ENCODE measurements at regions of chr10 and their contacts with region 1.

Region 1: GRCh38 chr10:26725837-26726727 is 28.6 kb downstream of the PDSS1 start:
- DNase-seq: peak; percentile 51
- H3K4me3 Mint-ChIP-seq: no peak overlapping the region
- H3K27ac Mint-ChIP-seq: no peak overlapping the region
- H3K4me1 Mint-ChIP-seq: no peaks in the 10 kb centered on the region
- H3K27me3 Mint-ChIP-seq: no peaks in the 10 kb centered on the region

Region 2: DNA sequence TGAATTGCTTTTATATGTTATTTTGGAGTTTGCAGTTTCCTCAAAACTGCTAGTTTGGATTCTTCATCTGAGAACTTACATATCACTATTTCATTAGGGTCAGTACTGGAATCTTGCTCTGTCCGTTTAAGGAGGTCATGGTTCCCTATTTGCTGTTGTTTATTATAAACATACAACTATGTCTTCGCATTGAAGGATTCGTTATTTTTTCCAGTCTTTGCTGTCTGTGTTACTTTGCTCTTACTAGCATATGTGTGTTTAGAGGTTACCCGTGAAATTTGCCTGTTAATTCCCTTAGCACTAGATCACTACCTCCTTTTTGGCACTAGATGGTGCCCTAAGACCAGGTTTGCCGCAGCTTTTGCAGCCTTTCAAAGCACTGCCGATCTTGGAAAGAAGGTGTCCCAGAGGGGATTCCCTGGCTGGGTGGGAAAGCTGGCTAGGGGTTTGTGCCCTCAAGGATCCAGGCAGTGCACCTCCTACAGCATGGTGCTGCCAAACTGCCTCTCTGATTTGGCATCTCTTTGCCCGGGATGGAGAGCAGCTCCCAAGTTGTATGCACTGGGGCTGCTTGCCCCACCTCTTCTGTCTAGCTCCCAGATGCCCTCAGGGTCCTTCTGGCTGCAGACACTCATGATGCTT is 391.0 kb before region 1 on chr10:
- CTCF ChIA-PET with region 1: interaction called, 5 read pairs
- intact Hi-C with region 1: loop called (anchors 1 kb)
- DNase-seq: peak; percentile 76
- H3K4me3 Mint-ChIP-seq: peak overlapping the region; percentile 71
- H3K27ac Mint-ChIP-seq: peak overlapping the region; percentile 48
- H3K4me1 Mint-ChIP-seq: peaks cover 8% of the 10 kb centered on the region
- H3K27me3 Mint-ChIP-seq: no peaks in the 10 kb centered on the region

Region 3: DNA sequence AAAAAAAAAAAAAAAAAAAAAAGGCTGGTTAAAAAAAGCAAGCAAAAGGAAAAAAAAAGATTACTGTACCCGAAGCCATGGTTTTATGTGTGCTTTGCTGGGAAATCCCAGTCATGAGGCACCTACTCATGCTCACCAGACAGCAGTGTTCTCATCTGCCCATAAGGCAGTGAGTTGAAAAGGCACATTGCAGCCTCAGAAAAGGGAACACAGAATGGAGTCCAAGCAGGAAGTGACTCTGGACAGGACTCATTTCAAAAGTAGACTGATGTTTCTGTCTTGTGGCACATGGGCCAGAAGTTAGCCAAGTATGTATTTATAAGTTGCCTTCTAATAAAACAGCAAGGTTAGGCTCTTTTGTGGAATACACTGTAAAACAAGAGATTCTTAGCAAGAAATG is 11.6 kb after region 1 on chr10:
- CTCF ChIA-PET with region 1: interaction called, 18 read pairs
- intact Hi-C with region 1: no loop called
- DNase-seq: peak; percentile 75
- H3K4me3 Mint-ChIP-seq: no peak overlapping the region
- H3K27ac Mint-ChIP-seq: peak overlapping the region; percentile 88
- H3K4me1 Mint-ChIP-seq: peaks cover 36% of the 10 kb centered on the region
- H3K27me3 Mint-ChIP-seq: no peaks in the 10 kb centered on the region

Region 4: GRCh38 chr10:26839966-26840627 is 114.0 kb after region 1 on chr10:
- CTCF ChIA-PET with region 1: interaction called, 10 read pairs
- intact Hi-C with region 1: no loop called
- DNase-seq: no peak
- H3K4me3 Mint-ChIP-seq: no peak overlapping the region
- H3K27ac Mint-ChIP-seq: no peak overlapping the region
- H3K4me1 Mint-ChIP-seq: peaks cover 64% of the 10 kb centered on the region
- H3K27me3 Mint-ChIP-seq: no peaks in the 10 kb centered on the region

Region 5: GRCh38 chr10:27072436-27073114 is 346.5 kb after region 1 on chr10:
- CTCF ChIA-PET with region 1: no interaction called
- intact Hi-C with region 1: no loop called
- DNase-seq: no peak
- H3K4me3 Mint-ChIP-seq: no peak overlapping the region
- H3K27ac Mint-ChIP-seq: no peak overlapping the region
- H3K4me1 Mint-ChIP-seq: peaks cover 16% of the 10 kb centered on the region
- H3K27me3 Mint-ChIP-seq: no peaks in the 10 kb centered on the region

Region 6: DNA sequence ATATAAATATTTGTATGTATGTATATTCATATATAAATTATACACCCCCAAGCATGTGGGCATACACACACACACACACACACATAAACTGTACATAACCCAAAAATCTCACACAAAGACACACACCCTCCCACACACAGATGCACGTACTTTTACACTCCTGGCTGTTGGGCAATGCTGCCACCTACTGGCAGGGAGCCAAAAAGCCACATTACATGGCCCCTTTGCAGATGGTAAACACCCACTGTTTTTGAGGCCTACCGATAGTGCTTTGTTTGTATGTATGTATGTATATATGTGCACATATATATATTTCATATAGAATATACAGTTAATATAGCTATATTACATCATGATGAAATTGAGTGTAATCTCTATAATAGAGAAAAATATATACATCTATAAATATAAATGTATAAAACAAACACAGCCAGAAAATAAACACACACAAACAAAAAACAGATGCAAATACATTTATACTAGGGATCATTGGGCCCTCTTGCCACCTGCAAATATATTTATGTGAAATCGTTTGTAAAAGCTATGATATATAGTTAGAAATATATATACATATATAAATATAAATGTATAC is 634.6 kb after region 1 on chr10:
- CTCF ChIA-PET with region 1: no interaction called
- intact Hi-C with region 1: loop called (anchors 10 kb)
- DNase-seq: peak; percentile 89
- H3K4me3 Mint-ChIP-seq: no peak overlapping the region
- H3K27ac Mint-ChIP-seq: no peak overlapping the region
- H3K4me1 Mint-ChIP-seq: peaks cover 3% of the 10 kb centered on the region
- H3K27me3 Mint-ChIP-seq: no peaks in the 10 kb centered on the region

Measured in activated naive CD4-positive, alpha-beta T cell treated with anti-CD3 and anti-CD28 coated beads for 36 hours (primary cell).